Caco-2 (cell line): ENCODE measurements at regions of chr2 and their contacts with region 1.

Region 1: GRCh38 chr2:70948337-70949003 is 12.8 kb downstream of the ATP6V1B1 start:
- DNase-seq: peak; percentile 84 to 88
- H3K4me3 ChIP-seq: peak overlapping the region; percentile 6; the same call in 1 of the 2 replicates
- H3K4me3 Mint-ChIP-seq: peak overlapping the region; percentile 75
- H3K27ac Mint-ChIP-seq: peak overlapping the region; percentile 30
- H3K4me1 ChIP-seq: no peaks in the 10 kb centered on the region
- H3K4me1 Mint-ChIP-seq: peaks cover 15% of the 10 kb centered on the region
- H3K27me3 ChIP-seq: no peaks in the 10 kb centered on the region
- H3K27me3 Mint-ChIP-seq: peaks cover 6% of the 10 kb centered on the region
- CTCF ChIP-seq: peak; percentile 89 to 90

Region 2: GRCh38 chr2:70789304-70790135 is 158.9 kb before region 1 on chr2:
- CTCF ChIA-PET with region 1: interaction called, 8 read pairs
- POLR2A ChIA-PET with region 1: no interaction called
- intact Hi-C with region 1: loop called (anchors 1 kb)
- DNase-seq: peak; percentile 63 to 64
- H3K4me3 ChIP-seq: no peak overlapping the region
- H3K4me3 Mint-ChIP-seq: no peak overlapping the region
- H3K27ac Mint-ChIP-seq: no peak overlapping the region
- H3K4me1 ChIP-seq: no peaks in the 10 kb centered on the region
- H3K4me1 Mint-ChIP-seq: no peaks in the 10 kb centered on the region
- H3K27me3 ChIP-seq: 0 out of 2 replicates have a peak, but pooled peaks cover 1% of the 10 kb centered on the region
- H3K27me3 Mint-ChIP-seq: peaks cover 27% of the 10 kb centered on the region
- CTCF ChIP-seq: peak; percentile 71 to 72

Region 3: GRCh38 chr2:70871398-70872211 is 76.9 kb before region 1 on chr2:
- CTCF ChIA-PET with region 1: interaction called, 36 read pairs
- POLR2A ChIA-PET with region 1: no interaction called
- intact Hi-C with region 1: loop called (anchors 1 kb)
- DNase-seq: peak; percentile 86 to 93
- H3K4me3 ChIP-seq: no peak overlapping the region
- H3K4me3 Mint-ChIP-seq: peak overlapping the region; percentile 50
- H3K27ac Mint-ChIP-seq: no peak overlapping the region
- H3K4me1 ChIP-seq: 0 out of 2 replicates have a peak, but pooled peaks cover 8% of the 10 kb centered on the region
- H3K4me1 Mint-ChIP-seq: no peaks in the 10 kb centered on the region
- H3K27me3 ChIP-seq: no peaks in the 10 kb centered on the region; the same call in 1 of the 2 replicates
- H3K27me3 Mint-ChIP-seq: peaks cover 6% of the 10 kb centered on the region
- CTCF ChIP-seq: peak; percentile 97 to 98

Region 4: DNA sequence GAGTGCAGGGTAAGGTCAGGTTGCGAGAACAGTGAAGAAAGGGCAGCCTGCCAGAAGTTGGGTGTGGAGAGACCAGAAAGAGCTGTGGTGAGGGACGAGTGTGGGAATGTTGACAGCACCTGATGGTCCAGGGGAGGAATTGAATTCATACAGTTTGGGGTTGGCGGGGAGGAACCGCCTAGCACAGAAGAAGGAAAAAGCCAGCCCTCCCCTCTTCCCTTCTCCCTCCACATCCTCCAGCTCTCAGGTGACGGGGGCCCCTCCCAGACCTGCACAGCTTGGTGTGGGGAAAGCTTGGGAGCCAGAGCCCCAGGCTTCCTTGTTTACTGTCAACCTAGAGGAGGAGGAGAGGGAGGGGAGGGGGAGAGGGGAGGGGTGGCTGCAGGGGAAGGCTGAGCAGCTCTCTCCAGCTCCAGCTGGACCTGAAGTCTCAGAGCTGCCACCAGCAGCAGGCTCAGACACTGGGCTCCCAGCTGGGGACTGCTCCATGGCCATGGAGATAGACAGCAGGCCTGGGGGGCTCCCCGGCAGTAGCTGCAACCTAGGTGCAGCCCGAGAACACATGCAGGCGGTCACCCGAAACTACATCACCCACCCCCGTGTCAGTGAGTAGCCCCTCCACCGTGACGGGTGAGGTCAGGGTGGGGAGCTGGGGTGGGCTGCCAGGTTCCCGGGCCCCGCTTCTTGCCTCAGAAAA is 12.9 kb before region 1 on chr2 and contains the start of gene ATP6V1B1:
- CTCF ChIA-PET with region 1: interaction called, 22 read pairs
- POLR2A ChIA-PET with region 1: no interaction called
- intact Hi-C with region 1: no loop called
- DNase-seq: peak; percentile 28 to 66
- H3K4me3 ChIP-seq: peak within 1 kb of the TSS; percentile 8; the same call in 1 of the 2 replicates
- H3K4me3 Mint-ChIP-seq: peak within 1 kb of the TSS; percentile 45
- H3K27ac Mint-ChIP-seq: peak within 1 kb of the TSS; percentile 67
- H3K4me1 ChIP-seq: peaks cover 28% of the 10 kb centered on the region
- H3K4me1 Mint-ChIP-seq: peaks cover 9% of the 10 kb centered on the region
- H3K27me3 ChIP-seq: no peaks in the 10 kb centered on the region
- H3K27me3 Mint-ChIP-seq: no peaks in the 10 kb centered on the region
- CTCF ChIP-seq: no peak
- total RNA-seq, gene ATP6V1B1: 2.6 and 4.0 TPM in 2 replicates